ENCODE measurements at regions of chr7 and their contacts with region 1.

Region 1: GRCh38 chr7:66140924-66141323 is 26.3 kb downstream of the CRCP start:
- DNase-seq: no peak
- H3K4me3 ChIP-seq: no peak overlapping the region
- H3K27ac ChIP-seq: no peak overlapping the region
- H3K27me3 ChIP-seq: no peaks in the 10 kb centered on the region
- CTCF ChIP-seq: peak; percentile 77

Region 2: GRCh38 chr7:66152371-66153191 is 11.7 kb after region 1 on chr7:
- CTCF ChIA-PET with region 1: interaction called, 10 read pairs
- POLR2A ChIA-PET with region 1: no interaction called
- DNase-seq: no peak
- H3K4me3 ChIP-seq: no peak overlapping the region
- H3K27ac ChIP-seq: peak overlapping the region; percentile 95
- H3K27me3 ChIP-seq: no peaks in the 10 kb centered on the region
- CTCF ChIP-seq: no peak

Measured in AG04450 (cell line).